IMR-90 (cell line): ENCODE measurements at regions of chr16 and their contacts with region 1.

Region 1: DNA sequence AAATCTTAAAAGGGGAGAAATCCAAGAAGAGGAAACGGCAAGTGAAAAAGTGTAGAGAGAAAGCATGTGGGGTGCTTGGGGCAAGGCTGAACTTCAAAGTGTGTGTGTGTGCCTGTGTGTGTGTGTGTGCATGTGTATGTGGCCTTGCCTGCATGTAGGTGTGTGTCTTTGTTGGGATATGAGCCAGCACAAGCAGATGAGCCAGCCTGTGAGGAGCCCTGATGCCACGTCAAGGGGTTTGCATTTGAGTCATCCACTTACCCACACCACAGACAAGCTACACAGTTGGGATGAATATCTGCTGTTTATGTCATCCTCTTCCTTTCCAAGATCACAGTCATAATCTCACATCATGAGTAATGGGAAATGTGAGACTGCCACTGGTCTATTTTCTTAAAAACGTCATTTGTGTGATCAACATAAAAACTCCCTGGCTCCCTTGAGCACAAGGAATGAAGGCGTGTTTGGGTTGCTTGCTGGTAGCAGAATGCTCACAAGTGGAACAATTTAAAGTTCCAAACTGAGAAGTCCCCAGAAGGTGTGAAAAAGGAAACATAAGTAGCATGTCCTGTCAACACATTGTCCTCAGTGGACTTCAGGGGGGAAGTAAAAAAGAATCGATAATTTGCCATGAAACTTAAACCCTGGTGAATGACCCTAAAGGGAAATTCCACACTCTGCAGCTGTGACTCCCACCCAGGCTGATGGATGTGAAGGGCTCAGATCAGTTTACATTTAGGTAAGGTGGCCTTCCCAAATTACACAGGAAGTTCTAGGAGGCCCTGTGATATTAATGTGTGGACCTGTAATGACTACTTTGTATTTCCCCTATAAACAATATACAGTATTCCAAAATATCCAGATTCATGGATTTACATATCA is 14.7 kb downstream of the KCTD19 start:
- DNase-seq: peak; percentile 100
- ATAC-seq: peak; percentile 94
- H3K4me3 ChIP-seq: no peak overlapping the region
- H3K27ac ChIP-seq: peak overlapping the region; percentile 82
- H3K4me1 ChIP-seq: peaks cover 15% of the 10 kb centered on the region
- H3K27me3 ChIP-seq: no peaks in the 10 kb centered on the region
- CTCF ChIP-seq: no peak
- POLR2A ChIP-seq: peak; percentile 92
- RAD21 ChIP-seq: 0 out of 2 replicates have a peak, but pooled peaks have one; percentile 13

Region 2: GRCh38 chr16:65737831-65738230 is 1574.0 kb before region 1 on chr16:
- CTCF ChIA-PET with region 1: no interaction called
- POLR2A ChIA-PET with region 1: no interaction called
- dilution Hi-C with region 1: no loop called
- in situ Hi-C with region 1: no loop called
- intact Hi-C with region 1: no loop called
- DNase-seq: no peak
- ATAC-seq: no peak
- H3K4me3 ChIP-seq: no peak overlapping the region
- H3K27ac ChIP-seq: no peak overlapping the region
- H3K4me1 ChIP-seq: no peaks in the 10 kb centered on the region
- H3K27me3 ChIP-seq: peaks cover 15% of the 10 kb centered on the region
- CTCF ChIP-seq: no peak
- POLR2A ChIP-seq: no peak
- RAD21 ChIP-seq: no peak

Region 3: DNA sequence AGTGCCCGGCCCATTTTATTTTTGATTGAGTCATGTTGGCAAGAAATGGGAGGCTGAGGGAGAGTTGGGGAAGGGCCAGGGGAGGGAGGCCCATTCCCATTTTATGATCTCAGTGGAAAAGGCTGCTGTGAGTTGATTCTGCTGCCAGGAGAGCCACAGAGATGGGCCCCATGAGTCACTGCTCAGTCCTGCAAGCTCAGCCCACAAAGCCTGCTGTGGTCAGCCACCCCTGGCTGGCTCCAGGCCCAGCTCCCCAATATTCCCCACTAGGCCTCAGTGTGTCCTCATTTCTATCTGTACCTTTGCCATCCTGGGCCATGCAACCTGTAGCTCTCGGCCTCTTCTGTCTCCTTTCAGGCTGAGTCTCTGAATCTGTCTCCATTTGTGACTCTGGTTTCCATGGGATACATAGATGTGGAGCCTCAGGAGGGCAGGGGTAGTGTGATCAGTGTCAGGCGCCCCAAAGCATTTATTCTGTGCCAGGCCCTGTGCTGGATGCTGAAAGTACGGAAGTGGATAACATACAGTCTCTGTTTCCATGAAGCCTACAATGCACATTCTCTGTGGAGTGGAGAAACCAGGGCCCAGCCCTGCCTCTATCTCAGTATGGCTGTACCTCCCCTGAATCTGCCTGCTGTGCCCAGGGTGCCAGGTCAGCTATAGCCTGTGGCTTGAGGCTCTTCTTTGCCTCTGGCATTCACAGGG is 34.4 kb before region 1 on chr16:
- CTCF ChIA-PET with region 1: no interaction called
- POLR2A ChIA-PET with region 1: no interaction called
- dilution Hi-C with region 1: no loop called
- in situ Hi-C with region 1: no loop called
- intact Hi-C with region 1: loop called (anchors 1 kb)
- DNase-seq: peak; percentile 100
- ATAC-seq: peak; percentile 73
- H3K4me3 ChIP-seq: no peak overlapping the region
- H3K27ac ChIP-seq: peak overlapping the region; percentile 91
- H3K4me1 ChIP-seq: peaks cover 24% of the 10 kb centered on the region
- H3K27me3 ChIP-seq: no peaks in the 10 kb centered on the region
- CTCF ChIP-seq: no peak
- POLR2A ChIP-seq: no peak; the same call in 1 of the 2 replicates
- RAD21 ChIP-seq: no peak

Region 4: DNA sequence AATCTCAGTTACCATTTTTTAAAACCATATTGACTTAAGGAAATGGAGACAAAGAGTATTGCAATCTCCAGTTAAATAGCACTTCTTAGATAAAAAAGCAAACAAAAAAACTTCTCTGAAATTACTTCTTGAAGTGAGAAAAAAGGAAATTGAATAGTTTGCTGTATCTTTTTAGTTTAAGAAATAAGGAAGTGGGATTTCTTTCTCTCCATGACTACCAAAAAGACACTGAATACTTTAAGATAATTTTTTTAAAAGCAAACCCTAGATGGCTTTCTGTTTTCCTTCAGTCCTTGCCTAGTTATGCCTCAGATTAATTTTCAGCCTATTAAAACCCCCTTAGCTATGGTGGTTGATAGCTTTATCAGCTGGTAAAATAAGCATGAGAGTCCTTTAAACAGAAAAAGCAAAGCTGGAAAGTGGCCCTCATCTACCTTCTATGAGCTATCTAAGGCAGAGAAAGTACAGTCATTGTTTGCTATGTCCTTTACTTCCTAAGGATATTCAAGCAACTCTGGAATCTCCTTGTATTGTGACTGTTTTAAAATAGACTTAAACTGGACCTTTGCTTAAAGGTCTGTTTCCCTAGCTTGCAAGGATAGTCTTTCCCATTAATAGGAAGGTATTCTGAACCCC is 52.9 kb after region 1 on chr16:
- CTCF ChIA-PET with region 1: no interaction called
- POLR2A ChIA-PET with region 1: no interaction called
- dilution Hi-C with region 1: no loop called
- in situ Hi-C with region 1: no loop called
- intact Hi-C with region 1: no loop called
- DNase-seq: no peak
- ATAC-seq: no peak
- H3K4me3 ChIP-seq: no peak overlapping the region
- H3K27ac ChIP-seq: no peak overlapping the region
- H3K4me1 ChIP-seq: no peaks in the 10 kb centered on the region
- H3K27me3 ChIP-seq: peaks cover 37% of the 10 kb centered on the region
- CTCF ChIP-seq: no peak
- POLR2A ChIP-seq: no peak
- RAD21 ChIP-seq: no peak

Region 5: GRCh38 chr16:67459066-67459860 is 147.4 kb after region 1 on chr16:
- CTCF ChIA-PET with region 1: no interaction called
- POLR2A ChIA-PET with region 1: no interaction called
- dilution Hi-C with region 1: no loop called
- in situ Hi-C with region 1: no loop called
- intact Hi-C with region 1: no loop called
- DNase-seq: no peak
- ATAC-seq: peak; percentile 34
- H3K4me3 ChIP-seq: no peak overlapping the region
- H3K27ac ChIP-seq: no peak overlapping the region; the same call in 1 of the 2 replicates
- H3K4me1 ChIP-seq: peaks cover 27% of the 10 kb centered on the region
- H3K27me3 ChIP-seq: no peaks in the 10 kb centered on the region
- CTCF ChIP-seq: no peak
- POLR2A ChIP-seq: no peak
- RAD21 ChIP-seq: no peak

Region 6: DNA sequence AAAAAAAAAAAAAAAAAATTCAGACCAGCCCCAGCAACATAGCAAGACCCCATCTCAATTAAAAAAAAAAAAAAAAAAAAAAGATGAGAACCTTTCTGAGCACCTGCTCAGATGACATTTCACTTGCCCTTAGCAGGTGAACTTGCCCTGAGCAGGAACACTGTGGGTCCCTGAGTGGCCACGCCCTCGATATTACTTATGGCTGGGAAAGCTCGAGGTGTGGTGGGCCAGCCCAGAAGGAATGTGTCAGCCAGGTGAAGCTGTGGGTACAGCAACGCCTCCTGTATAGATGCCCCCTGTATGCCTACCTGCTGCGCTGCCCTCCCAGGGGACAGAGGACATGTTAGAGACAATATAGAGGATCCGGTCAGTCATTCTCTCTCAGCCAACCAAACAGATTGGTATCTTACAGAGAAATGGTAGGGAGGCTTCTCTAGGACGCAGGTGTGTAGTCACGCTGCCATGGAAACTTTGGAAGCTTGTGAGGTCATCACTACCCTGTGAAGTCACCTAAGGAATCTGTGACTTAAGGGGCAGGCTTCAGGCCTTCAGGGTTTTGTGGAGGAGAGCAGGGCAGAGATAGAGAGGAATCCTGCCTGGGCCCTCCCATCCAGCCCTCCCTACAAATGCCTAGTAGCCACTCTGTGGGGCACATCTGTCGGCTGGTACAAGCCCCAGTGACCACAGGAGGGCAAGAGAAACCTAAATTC is 703.7 kb after region 1 on chr16 and contains the start of gene DPEP2NB:
- CTCF ChIA-PET with region 1: no interaction called
- POLR2A ChIA-PET with region 1: interaction called, 17 read pairs
- dilution Hi-C with region 1: no loop called
- in situ Hi-C with region 1: no loop called
- intact Hi-C with region 1: no loop called
- DNase-seq: no peak
- ATAC-seq: no peak
- H3K4me3 ChIP-seq: no peak within 1 kb of the TSS
- H3K27ac ChIP-seq: no peak within 1 kb of the TSS
- H3K4me1 ChIP-seq: no peaks in the 10 kb centered on the region
- H3K27me3 ChIP-seq: peaks cover 9% of the 10 kb centered on the region
- CTCF ChIP-seq: no peak
- POLR2A ChIP-seq: no peak
- RAD21 ChIP-seq: no peak
- total RNA-seq, gene DPEP2NB: not detected in 2 replicates